Pancreas (tissue), 10 donors: ENCODE measurements at regions of chr12 and their contacts with region 1.

Region 1: GRCh38 chr12:52156736-52157565 is 34.9 kb downstream of the KRT80 start:
- DNase-seq: peak; percentile 60 to 93 (median 85)
- ATAC-seq: peak; percentile 63 to 87 (median 82)
- H3K4me3 ChIP-seq: no peak overlapping the region
- H3K27ac ChIP-seq: no peak overlapping the region
- H3K4me1 ChIP-seq: no peaks in the 10 kb centered on the region
- H3K27me3 ChIP-seq: no peaks in the 10 kb centered on the region
- CTCF ChIP-seq: peak; percentile 84 to 90 (median 86)

Region 2: GRCh38 chr12:52230327-52231291 is 73.7 kb after region 1 on chr12:
- intact Hi-C with region 1: no loop called
- DNase-seq: peak in 5 of 6 donors; percentile 39 to 75 (median 62)
- ATAC-seq: peak; percentile 38 to 75 (median 66)
- H3K4me3 ChIP-seq: no peak overlapping the region
- H3K27ac ChIP-seq: peak overlapping the region in 3 of 4 donors; percentile 30 to 78 (median 44)
- H3K4me1 ChIP-seq: peaks cover 8 to 29% (median 24%) of the 10 kb centered on the region in 3 donors
- H3K27me3 ChIP-seq: no peaks in the 10 kb centered on the region
- CTCF ChIP-seq: no peak

Region 3: GRCh38 chr12:52321418-52321817 is 164.5 kb after region 1 on chr12:
- intact Hi-C with region 1: loop called in 1 of 3 experiments (anchors 5 kb)
- DNase-seq: no peak
- ATAC-seq: no peak
- H3K4me3 ChIP-seq: no peak overlapping the region
- H3K27ac ChIP-seq: no peak overlapping the region
- H3K4me1 ChIP-seq: no peaks in the 10 kb centered on the region
- H3K27me3 ChIP-seq: no peaks in the 10 kb centered on the region
- CTCF ChIP-seq: no peak

Region 4: GRCh38 chr12:52539083-52539820 is 382.3 kb after region 1 on chr12:
- intact Hi-C with region 1: no loop called
- DNase-seq: no peak
- ATAC-seq: no peak
- H3K4me3 ChIP-seq: no peak overlapping the region
- H3K27ac ChIP-seq: no peak overlapping the region
- H3K4me1 ChIP-seq: no peaks in the 10 kb centered on the region
- H3K27me3 ChIP-seq: no peaks in the 10 kb centered on the region
- CTCF ChIP-seq: no peak

Region 5: DNA sequence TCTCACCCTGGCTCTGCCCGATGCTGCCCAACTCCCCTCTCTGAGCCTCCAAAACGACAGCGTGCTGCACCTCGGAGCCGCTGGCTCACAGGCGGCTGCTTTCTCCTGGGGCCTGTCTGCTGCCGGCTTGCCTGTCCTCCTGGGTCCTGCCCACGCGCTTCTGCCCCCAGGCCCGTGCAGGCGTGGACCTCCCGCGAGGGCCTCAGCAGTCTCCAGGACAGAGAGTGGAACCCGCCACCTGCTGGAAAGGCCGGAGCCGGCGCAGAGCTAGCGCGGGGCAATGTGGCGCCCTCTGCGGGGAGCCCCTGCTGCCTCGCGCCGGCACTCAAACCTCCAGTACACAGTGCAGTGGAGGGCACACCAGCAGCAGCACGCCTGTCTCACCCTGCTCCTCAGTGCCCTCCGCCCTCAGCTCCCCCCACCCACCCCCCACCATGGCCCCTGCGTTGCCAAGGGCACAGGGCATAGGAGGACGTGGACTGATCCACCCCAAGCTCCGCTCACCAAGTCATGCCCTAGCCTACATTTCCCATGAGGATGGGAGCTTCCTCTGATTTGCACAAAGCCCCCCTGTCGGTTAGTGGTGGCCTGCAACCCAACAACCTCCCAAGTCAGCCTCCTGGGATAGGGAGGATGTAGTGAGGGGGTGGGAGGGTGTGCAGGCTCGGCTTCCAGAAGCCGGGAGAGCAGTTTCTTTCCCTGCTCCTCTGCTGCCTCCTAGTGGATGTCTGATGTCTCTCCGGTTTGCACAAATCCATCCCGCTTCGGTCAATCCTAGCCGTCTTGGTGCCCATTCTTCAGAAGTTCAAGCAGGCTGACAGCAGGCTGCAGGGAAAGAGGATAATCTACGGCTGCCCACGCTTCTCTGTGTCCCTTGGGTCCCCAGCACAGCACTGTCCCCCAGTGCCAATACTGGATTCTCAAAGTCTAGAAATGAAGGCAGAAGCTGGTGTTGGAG is 722.7 kb after region 1 on chr12:
- intact Hi-C with region 1: loop called in 2 of 3 experiments (anchors 5 kb)
- DNase-seq: peak; percentile 76 to 91 (median 86)
- ATAC-seq: peak; percentile 83 to 92 (median 88)
- H3K4me3 ChIP-seq: peak overlapping the region in 2 of 4 donors; percentile 3 to 44
- H3K27ac ChIP-seq: peak overlapping the region in 3 of 4 donors; percentile 33 to 61 (median 54)
- H3K4me1 ChIP-seq: peaks cover 0 to 5% (median 0%) of the 10 kb centered on the region in 3 donors
- H3K27me3 ChIP-seq: no peaks in the 10 kb centered on the region
- CTCF ChIP-seq: peak; percentile 40 to 71 (median 55)